MCF 10A (cell line): ENCODE measurements at regions of chr6 and their contacts with region 1.

Region 1: GRCh38 chr6:25889877-25890853 is 16.1 kb upstream of the SLC17A3 start:
- DNase-seq: peak; percentile 75
- H3K4me3 Mint-ChIP-seq: no peak overlapping the region
- H3K27ac Mint-ChIP-seq: no peak overlapping the region
- H3K4me1 Mint-ChIP-seq: no peaks in the 10 kb centered on the region
- H3K27me3 Mint-ChIP-seq: no peaks in the 10 kb centered on the region
- CTCF ChIP-seq: peak; percentile 60

Region 2: GRCh38 chr6:25564943-25565342 is 325.2 kb before region 1 on chr6:
- CTCF ChIA-PET with region 1: no interaction called
- POLR2A ChIA-PET with region 1: no interaction called
- intact Hi-C with region 1: loop called (anchors 5 kb)
- DNase-seq: no peak
- H3K4me3 Mint-ChIP-seq: no peak overlapping the region
- H3K27ac Mint-ChIP-seq: no peak overlapping the region
- H3K4me1 Mint-ChIP-seq: no peaks in the 10 kb centered on the region
- H3K27me3 Mint-ChIP-seq: no peaks in the 10 kb centered on the region
- CTCF ChIP-seq: no peak

Region 3: GRCh38 chr6:25601800-25602673 is 288.1 kb before region 1 on chr6:
- CTCF ChIA-PET with region 1: no interaction called
- POLR2A ChIA-PET with region 1: no interaction called
- intact Hi-C with region 1: loop called (anchors 1 kb)
- DNase-seq: peak; percentile 58
- H3K4me3 Mint-ChIP-seq: no peak overlapping the region
- H3K27ac Mint-ChIP-seq: no peak overlapping the region
- H3K4me1 Mint-ChIP-seq: no peaks in the 10 kb centered on the region
- H3K27me3 Mint-ChIP-seq: no peaks in the 10 kb centered on the region
- CTCF ChIP-seq: peak; percentile 47

Region 4: DNA sequence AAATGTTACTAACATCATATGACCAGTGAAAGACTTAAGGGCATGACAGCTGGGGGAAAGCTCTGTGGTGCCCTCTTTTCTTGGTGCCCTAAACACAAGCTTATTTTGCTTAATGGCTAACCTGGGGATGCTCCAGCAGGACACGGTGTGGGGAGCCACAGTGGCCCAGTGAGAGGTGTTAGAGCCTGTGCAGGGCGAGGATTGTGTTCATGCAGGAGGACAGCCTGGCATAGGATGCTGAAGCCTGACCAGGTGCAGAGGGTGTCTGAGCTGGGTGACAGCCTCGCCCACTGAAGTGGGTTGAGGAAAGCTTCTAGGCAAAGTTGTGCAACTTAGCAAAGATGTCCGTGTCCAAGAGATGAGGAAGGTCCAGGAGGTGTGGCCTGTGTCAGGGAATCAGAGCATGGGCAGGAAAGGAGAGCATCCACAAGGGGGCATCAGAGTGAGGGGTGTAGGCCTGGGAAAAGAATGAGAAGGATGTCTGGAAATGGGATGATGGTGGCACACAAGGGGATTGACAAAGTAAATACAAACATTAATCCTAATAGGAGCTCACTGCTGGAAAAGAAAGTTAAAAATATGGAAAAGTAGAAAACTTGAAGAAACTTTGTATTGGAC is 101.8 kb before region 1 on chr6:
- CTCF ChIA-PET with region 1: interaction called, 5 read pairs
- POLR2A ChIA-PET with region 1: no interaction called
- intact Hi-C with region 1: loop called (anchors 1 kb)
- DNase-seq: peak; percentile 77
- H3K4me3 Mint-ChIP-seq: no peak overlapping the region
- H3K27ac Mint-ChIP-seq: no peak overlapping the region
- H3K4me1 Mint-ChIP-seq: no peaks in the 10 kb centered on the region
- H3K27me3 Mint-ChIP-seq: no peaks in the 10 kb centered on the region
- CTCF ChIP-seq: peak; percentile 32

Region 5: DNA sequence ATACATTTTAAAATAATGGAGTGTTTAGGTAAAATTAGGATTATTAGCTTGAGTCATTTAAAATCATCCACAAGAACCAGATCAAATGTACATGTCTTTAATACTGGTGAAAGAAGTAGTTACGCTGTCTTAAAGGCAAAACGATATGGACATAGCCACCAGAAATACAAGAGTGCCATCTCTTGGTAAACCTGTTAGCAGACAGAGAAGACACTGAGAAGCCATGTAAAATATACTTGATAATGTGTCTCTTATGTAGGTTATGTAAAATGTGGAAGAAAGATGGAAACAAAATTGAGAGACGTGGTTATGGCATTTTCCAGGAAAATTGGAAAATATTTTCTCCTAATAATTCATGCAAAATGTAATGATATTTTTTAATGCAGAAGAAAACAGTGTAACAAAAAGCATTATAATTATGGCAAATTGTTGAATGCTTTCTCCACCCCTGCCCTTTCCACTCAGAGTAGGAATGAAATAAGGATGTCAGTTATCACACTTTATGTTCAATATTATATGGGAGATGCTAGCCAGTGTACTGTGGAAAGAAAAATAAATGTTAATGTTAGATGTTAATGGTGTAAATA is 52.5 kb after region 1 on chr6:
- CTCF ChIA-PET with region 1: no interaction called
- POLR2A ChIA-PET with region 1: no interaction called
- intact Hi-C with region 1: loop called (anchors 5 kb)
- DNase-seq: peak; percentile 60
- H3K4me3 Mint-ChIP-seq: no peak overlapping the region
- H3K27ac Mint-ChIP-seq: no peak overlapping the region
- H3K4me1 Mint-ChIP-seq: no peaks in the 10 kb centered on the region
- H3K27me3 Mint-ChIP-seq: no peaks in the 10 kb centered on the region
- CTCF ChIP-seq: peak; percentile 43